ENCODE measurements at regions of chr17 and their contacts with region 1.

Region 1: GRCh38 chr17:38351412-38352222 is at the start of gene SOCS7:
- DNase-seq: peak; percentile 89 to 97
- ATAC-seq: peak; percentile 90 to 93
- H3K4me3 ChIP-seq: peak within 1 kb of the TSS; percentile 95
- H3K27ac ChIP-seq: peak within 1 kb of the TSS; percentile 96 to 99
- H3K4me1 ChIP-seq: peaks cover 24% of the 10 kb centered on the region
- CTCF ChIP-seq: no peak
- EP300 ChIP-seq: no peak
- POLR2A ChIP-seq: peak; percentile 96
- RAD21 ChIP-seq: no peak
- polyA plus RNA-seq, gene SOCS7: 20.6 and 27.7 TPM in 2 replicates

Region 2: DNA sequence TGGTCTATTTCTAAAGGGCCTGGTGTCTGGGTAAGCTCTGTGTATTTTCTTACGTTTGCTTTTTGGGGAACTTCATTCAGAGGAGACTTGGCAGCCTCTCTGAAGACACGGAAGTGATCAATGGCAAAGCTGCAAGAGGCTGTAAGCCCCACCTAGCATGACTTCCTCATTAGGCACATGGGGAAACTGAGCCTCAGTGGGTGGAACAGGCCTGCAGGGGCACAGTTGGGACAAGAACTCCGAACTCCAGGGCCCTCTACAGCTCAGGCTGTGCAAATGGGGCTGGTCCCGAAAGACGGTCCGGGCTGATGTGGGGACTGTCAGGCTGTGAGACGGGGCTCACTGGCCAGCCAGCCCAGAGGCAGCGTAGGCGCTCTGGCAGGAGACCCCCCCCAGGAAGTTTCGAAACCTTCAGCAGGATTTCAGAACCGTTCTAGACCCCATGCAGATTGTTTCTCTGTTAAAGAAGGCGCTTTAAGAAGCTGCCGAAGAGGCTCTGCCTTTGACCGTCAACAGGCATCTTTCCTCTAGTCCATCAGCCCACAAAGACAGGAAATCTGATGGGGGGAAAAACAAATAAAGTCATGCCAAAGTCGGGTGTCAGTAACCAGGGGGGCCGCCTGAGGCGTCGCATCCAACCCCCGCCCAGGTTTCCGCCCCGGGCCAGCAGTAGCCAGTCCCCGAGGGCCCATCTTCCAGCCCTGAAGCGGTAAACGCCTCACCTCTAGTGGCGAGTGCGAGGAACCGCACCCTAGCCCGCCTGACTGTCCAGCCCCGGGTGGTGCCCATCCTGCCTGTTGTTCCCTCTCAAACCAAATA is 507.2 kb before region 1 on chr17:
- CTCF ChIA-PET with region 1: no interaction called
- POLR2A ChIA-PET with region 1: no interaction called
- DNase-seq: peak; percentile 71 to 87
- ATAC-seq: peak; percentile 96 to 99
- H3K4me3 ChIP-seq: no peak overlapping the region
- H3K27ac ChIP-seq: peak overlapping the region in 1 of 2 experiments; percentile 24; a peak in 3 of 6 replicates
- H3K4me1 ChIP-seq: peaks cover 16% of the 10 kb centered on the region; the same call in 2 of the 3 replicates
- CTCF ChIP-seq: peak; percentile 82
- EP300 ChIP-seq: no peak
- POLR2A ChIP-seq: no peak
- RAD21 ChIP-seq: peak; percentile 90 to 93

Region 3: GRCh38 chr17:38379438-38379837 is 27.8 kb after region 1 on chr17:
- CTCF ChIA-PET with region 1: interaction called, 24 read pairs
- POLR2A ChIA-PET with region 1: interaction called, 8 read pairs
- DNase-seq: no peak
- ATAC-seq: no peak
- H3K4me3 ChIP-seq: no peak overlapping the region
- H3K27ac ChIP-seq: no peak overlapping the region
- H3K4me1 ChIP-seq: no peaks in the 10 kb centered on the region
- CTCF ChIP-seq: no peak
- EP300 ChIP-seq: no peak
- POLR2A ChIP-seq: no peak
- RAD21 ChIP-seq: no peak

Region 4: DNA sequence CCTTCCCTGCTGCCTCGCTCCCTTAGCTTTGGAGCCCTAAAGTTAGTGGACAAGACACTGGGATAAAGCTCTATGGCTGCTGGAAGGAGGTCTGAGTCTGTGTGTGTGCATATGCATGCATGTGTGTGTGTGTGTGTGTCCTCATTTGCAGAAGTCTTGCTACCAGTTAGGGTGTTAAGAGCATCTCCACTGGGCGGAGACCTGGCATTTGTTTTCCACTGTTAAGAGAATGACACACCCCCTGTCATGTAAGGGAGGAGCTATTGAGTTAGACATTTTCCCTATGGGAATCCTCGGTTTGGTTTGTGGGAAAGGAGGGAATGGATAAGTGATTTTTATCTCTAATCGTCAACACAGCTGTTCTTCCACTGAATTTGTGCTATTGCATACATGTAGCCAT is 51.9 kb after region 1 on chr17:
- CTCF ChIA-PET with region 1: interaction called, 47 read pairs
- POLR2A ChIA-PET with region 1: no interaction called
- DNase-seq: peak in 1 of 2 experiments; percentile 56
- ATAC-seq: peak; percentile 56 to 65; a peak in 4 of 6 replicates
- H3K4me3 ChIP-seq: no peak overlapping the region
- H3K27ac ChIP-seq: no peak overlapping the region
- H3K4me1 ChIP-seq: no peaks in the 10 kb centered on the region
- CTCF ChIP-seq: no peak
- EP300 ChIP-seq: no peak
- POLR2A ChIP-seq: no peak
- RAD21 ChIP-seq: no peak

Region 5: DNA sequence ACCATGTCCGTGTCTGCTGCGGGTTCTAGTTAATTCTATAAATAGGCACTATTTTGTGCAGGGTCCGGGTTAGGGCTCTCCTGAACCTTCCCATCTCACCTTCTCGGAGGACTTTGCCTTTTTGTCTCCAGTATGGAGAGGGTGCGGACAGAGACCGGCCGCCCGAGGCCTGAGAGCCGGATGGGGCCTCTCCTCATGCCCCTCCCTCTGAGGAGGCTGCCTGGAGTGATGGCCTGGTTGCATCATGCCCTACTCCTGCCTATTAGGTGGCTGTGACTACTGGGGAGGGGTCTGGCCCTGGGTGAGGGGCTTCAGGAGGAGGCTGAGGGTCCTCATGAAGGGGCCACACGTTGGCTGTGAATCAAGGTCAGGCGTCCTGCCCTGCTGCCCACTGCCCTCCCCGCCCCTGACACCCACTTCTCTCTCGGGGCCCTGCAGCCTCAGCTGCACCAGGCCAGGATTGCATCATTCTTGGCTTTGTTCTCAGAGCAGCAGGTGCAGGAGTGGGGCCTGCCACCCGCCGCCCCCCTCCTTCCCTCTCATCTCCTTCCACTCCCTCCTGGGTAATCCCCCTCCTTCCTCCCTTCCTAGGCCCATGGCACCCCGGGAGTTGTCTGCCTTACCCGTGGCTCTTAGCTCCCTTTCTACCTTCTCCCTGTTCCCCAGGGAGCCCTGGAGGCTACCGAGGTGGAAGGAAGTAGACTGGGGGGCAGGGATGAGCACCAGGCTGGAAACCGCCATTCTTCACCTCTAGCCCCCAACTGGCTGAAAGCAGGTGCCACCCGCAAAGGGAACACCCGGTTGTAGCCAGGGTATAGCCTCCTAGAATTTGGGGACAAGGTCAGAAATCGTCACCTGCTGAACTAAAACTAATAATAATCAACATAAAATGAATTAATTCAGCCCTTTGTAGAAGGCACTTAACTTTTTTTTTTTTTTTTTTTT is 63.9 kb after region 1 on chr17:
- CTCF ChIA-PET with region 1: interaction called, 203 read pairs
- POLR2A ChIA-PET with region 1: interaction called, 31 read pairs
- DNase-seq: peak in 1 of 2 experiments; percentile 64
- ATAC-seq: peak; percentile 66 to 75
- H3K4me3 ChIP-seq: peak overlapping the region; percentile 17; the same call in 2 of the 3 replicates
- H3K27ac ChIP-seq: peak overlapping the region; percentile 79 to 91
- H3K4me1 ChIP-seq: peaks cover 17% of the 10 kb centered on the region
- CTCF ChIP-seq: no peak
- EP300 ChIP-seq: peak in 1 of 2 experiments; percentile 26; a peak in 1 of 5 replicates
- POLR2A ChIP-seq: no peak
- RAD21 ChIP-seq: no peak

Region 6: GRCh38 chr17:38428112-38428642 is 76.6 kb after region 1 on chr17 and contains the start of gene ARHGAP23:
- CTCF ChIA-PET with region 1: interaction called, 28 read pairs
- POLR2A ChIA-PET with region 1: interaction called, 3 read pairs
- DNase-seq: peak; percentile 57 to 60
- ATAC-seq: peak; percentile 62 to 64
- H3K4me3 ChIP-seq: peak within 1 kb of the TSS; percentile 90
- H3K27ac ChIP-seq: peak within 1 kb of the TSS; percentile 77 to 95
- H3K4me1 ChIP-seq: peaks cover 29% of the 10 kb centered on the region
- CTCF ChIP-seq: no peak
- EP300 ChIP-seq: no peak
- POLR2A ChIP-seq: peak; percentile 40
- RAD21 ChIP-seq: no peak
- polyA plus RNA-seq, gene ARHGAP23: 4.8 and 5.5 TPM in 2 replicates

Region 7: DNA sequence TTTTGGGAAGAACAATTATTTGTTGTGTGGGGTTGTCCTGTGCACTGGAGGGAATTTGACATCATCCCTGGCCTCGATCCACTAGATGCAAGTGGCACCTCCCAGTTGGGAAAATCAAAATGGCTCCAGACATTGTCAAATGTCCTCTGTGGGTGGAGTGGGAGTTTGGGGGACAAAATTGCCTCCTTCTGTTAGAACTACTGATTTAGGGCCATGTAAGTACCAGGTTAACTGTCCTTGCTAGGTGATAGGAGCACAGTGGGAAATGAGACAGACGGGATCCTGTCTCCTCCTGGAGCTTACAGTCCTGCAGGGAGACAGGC is 133.5 kb after region 1 on chr17:
- CTCF ChIA-PET with region 1: interaction called, 31 read pairs
- POLR2A ChIA-PET with region 1: no interaction called
- DNase-seq: no peak
- ATAC-seq: no peak
- H3K4me3 ChIP-seq: no peak overlapping the region
- H3K27ac ChIP-seq: no peak overlapping the region
- H3K4me1 ChIP-seq: no peaks in the 10 kb centered on the region
- CTCF ChIP-seq: no peak
- EP300 ChIP-seq: no peak
- POLR2A ChIP-seq: no peak
- RAD21 ChIP-seq: no peak

Measured in A549 (cell line).